Activated CD8-positive, alpha-beta memory T cell treated with anti-CD3 and anti-CD28 coated beads, Interleukin-2, amount 10 ng/mL, durations not matched to agents 7 days and 5 days (primary cell): ENCODE measurements at regions of chr1 and their contacts with region 1.

Region 1: DNA sequence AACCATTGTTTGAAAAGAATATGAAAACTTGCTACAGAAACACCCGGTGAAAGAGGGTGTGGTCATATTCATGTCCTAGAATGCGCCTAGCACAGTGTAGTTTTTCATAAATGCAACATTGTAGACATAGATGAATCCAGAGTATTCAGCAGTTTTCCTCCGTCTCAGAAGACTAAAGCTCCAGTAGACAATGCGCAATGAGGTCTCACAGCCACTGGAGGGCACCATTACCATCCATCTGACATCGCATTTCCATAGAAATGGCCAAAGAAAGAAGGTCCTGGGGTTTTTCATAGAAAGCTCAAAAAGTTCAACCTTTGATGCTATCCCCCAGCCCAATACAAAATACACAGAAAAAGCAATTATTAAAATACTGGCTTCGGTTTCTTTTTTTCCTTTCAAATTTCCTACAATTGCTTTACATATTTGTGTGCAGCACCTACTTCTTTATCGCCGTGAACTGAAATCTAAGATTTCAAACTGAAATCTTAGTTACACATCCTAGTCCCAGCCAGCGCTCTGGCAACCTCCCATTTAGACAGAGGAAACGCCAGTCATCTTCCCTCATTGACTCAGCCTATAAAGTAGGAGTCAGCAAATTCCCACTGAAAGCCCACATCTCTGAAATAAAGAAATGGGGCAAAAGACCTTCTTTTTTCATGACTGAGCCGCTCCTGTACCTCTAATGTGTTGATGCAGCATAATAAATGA is 3.9 kb upstream of the CD58 start:
- DNase-seq: peak; percentile 76
- ATAC-seq: no peak
- H3K4me3 Mint-ChIP-seq: no peak overlapping the region
- H3K27ac Mint-ChIP-seq: no peak overlapping the region
- H3K4me1 Mint-ChIP-seq: peaks cover 30% of the 10 kb centered on the region
- H3K27me3 Mint-ChIP-seq: peaks cover 5% of the 10 kb centered on the region

Region 2: DNA sequence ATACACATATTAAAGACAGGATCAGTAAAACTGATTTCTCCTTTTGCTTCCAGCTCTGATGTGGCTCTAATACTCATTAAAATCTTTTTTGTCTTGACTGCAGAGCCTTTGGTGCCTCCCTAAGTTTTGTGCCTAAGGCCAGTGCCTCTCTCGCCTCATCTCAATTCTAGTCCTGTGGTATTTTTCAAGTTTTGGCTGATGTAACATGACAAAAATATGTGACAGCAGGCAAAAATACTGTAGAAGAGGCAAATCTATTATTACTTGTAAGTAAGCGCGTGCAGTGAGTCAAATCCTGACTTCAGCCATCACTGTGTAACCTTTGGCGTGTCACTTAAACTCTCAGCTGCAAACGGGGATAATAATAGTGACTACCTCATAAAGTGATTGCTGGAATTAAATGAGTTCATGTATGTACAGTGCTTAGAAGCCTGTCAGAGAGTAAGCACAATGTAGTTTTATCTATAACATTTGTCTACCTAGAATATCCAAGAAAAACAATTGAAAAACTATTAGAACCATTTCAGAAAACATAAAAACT is 389.5 kb before region 1 on chr1:
- CTCF ChIA-PET with region 1: no interaction called
- DNase-seq: no peak
- ATAC-seq: no peak
- H3K4me3 Mint-ChIP-seq: no peak overlapping the region
- H3K27ac Mint-ChIP-seq: no peak overlapping the region
- H3K4me1 Mint-ChIP-seq: no peaks in the 10 kb centered on the region
- H3K27me3 Mint-ChIP-seq: peaks cover 21% of the 10 kb centered on the region

Region 3: DNA sequence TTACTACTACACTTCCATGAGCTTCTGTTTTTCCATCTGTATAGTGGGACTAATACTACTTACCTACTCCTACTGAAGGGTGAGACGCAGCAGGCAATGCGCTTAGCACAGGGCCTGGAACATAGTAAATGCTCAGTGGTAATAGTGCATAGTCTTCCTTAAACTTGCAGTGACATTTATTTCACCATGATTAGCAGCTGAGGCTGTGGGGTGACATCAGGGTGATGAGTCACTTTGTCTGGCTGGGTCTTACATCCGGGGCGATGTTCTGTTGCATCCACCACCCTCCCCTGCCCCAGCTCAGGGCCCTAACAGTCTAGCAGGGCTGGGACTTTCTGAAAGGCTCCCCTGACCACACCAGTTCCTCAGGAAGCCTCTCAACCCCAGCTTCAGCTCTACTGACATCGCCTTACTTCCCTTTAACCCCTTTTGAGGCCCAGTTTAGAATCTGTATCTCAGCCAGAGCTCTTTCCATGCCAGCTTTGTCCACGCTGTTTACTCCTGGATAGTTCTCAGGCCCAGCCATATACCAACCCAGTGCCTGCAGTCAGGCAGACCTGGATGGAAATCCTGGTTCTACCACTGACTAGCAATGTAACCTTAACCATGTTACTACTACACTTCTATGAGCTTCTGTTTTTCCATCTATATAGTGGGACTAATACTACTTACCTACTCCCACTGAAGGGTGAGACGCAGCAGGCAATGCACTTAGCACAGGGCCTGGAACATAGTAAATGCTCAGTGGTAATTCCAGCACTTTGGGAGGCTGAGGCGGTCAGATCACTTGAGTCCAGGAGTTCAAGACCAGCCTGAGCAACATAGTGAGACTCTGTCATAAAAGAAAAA is 70.2 kb before region 1 on chr1:
- CTCF ChIA-PET with region 1: interaction called, 12 read pairs
- DNase-seq: peak; percentile 96
- ATAC-seq: peak; percentile 94
- H3K4me3 Mint-ChIP-seq: peak overlapping the region; percentile 18
- H3K27ac Mint-ChIP-seq: peak overlapping the region; percentile 92
- H3K4me1 Mint-ChIP-seq: peaks cover 76% of the 10 kb centered on the region
- H3K27me3 Mint-ChIP-seq: no peaks in the 10 kb centered on the region

Region 4: DNA sequence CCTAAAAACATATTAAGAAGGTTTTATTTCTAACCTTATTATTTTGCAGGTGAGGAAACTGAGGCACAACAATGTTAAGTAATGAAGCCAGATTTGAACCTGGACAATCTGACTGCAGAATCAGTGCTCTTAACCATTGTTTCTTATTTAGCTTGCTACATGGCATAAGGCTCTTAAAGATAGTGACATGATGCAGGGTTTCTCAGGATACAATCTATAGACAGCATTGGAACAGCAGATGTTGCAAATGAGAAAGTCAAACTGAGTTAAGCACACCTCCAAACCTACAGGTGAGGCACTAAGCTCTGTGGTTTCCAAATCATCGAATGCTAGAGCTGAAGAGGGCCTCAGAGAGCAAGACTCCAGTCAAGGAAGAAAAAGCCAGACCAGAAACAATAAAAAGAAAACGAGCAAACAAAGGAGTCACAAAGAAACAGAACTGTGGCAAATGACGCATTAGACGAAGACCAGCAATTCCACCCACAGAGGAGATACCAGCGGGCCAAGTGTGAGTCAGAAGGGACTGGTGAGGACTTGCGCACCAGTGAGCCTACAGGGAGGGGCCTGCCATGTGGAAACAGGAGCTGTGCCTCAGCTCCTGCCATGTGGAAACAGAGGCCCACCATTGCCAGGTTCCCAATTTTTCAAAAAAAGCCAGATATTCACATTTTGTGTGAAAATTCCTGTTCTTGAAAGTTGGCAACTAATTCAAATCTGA is 18.3 kb before region 1 on chr1:
- CTCF ChIA-PET with region 1: interaction called, 28 read pairs
- DNase-seq: peak; percentile 93
- ATAC-seq: peak; percentile 94
- H3K4me3 Mint-ChIP-seq: peak overlapping the region; percentile 48
- H3K27ac Mint-ChIP-seq: peak overlapping the region; percentile 95
- H3K4me1 Mint-ChIP-seq: peaks cover 84% of the 10 kb centered on the region
- H3K27me3 Mint-ChIP-seq: no peaks in the 10 kb centered on the region

Region 5: GRCh38 chr1:116586741-116587143 is 12.0 kb after region 1 on chr1:
- CTCF ChIA-PET with region 1: interaction called, 11 read pairs
- DNase-seq: no peak
- ATAC-seq: no peak
- H3K4me3 Mint-ChIP-seq: no peak overlapping the region
- H3K27ac Mint-ChIP-seq: no peak overlapping the region
- H3K4me1 Mint-ChIP-seq: no peaks in the 10 kb centered on the region
- H3K27me3 Mint-ChIP-seq: no peaks in the 10 kb centered on the region

Region 6: DNA sequence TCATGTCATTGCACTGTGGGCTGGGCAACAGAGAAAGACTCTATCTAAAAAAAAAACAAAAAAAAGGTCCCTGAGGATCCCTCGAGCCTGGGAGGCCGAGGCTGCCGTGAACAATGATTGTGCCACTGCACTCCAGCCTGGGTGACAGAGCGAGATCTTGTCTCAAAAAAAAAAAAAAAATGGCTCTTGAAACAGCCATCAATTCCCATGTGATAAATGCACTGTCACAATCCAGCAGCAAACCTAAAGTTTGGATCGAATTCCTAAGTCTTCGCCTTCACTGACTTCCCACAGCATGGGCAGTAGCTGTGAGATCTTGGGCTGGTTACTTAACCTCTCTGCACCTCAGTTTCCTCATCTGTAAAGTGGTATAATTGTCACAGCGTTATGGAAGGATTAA is 49.3 kb after region 1 on chr1:
- CTCF ChIA-PET with region 1: no interaction called
- DNase-seq: no peak
- ATAC-seq: no peak
- H3K4me3 Mint-ChIP-seq: no peak overlapping the region
- H3K27ac Mint-ChIP-seq: no peak overlapping the region
- H3K4me1 Mint-ChIP-seq: no peaks in the 10 kb centered on the region
- H3K27me3 Mint-ChIP-seq: peaks cover 8% of the 10 kb centered on the region

Region 7: DNA sequence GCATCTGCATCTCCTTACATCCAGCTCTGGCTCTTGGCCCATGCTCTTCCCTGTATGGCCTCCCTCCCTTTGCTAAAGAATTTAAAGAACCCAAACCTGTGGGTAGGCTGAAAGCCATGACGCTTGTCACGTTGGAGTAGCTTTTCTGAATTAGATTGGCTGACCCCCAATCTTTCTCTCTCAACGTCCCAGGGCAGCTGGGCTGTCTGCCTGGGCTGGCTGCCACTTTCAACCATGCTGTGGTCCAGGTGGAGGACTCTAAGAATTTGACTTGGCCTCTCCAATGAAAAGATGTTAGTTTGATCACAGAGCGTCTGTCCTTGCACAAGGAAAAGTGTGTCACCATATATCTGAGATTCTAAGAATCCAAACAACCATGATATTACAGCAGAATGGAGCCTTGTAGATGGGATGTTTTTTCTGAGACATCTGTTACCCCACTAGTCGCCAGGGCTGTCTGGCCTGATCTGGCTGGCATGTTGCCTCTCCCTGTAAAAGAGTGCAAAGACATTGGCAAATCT is 99.3 kb after region 1 on chr1:
- CTCF ChIA-PET with region 1: interaction called, 16 read pairs
- DNase-seq: no peak
- ATAC-seq: no peak
- H3K4me3 Mint-ChIP-seq: no peak overlapping the region
- H3K27ac Mint-ChIP-seq: no peak overlapping the region
- H3K4me1 Mint-ChIP-seq: peaks cover 1% of the 10 kb centered on the region
- H3K27me3 Mint-ChIP-seq: peaks cover 61% of the 10 kb centered on the region

Region 8: GRCh38 chr1:116811321-116811720 is 236.6 kb after region 1 on chr1:
- CTCF ChIA-PET with region 1: no interaction called
- DNase-seq: no peak
- ATAC-seq: no peak
- H3K4me3 Mint-ChIP-seq: no peak overlapping the region
- H3K27ac Mint-ChIP-seq: peak overlapping the region; percentile 76
- H3K4me1 Mint-ChIP-seq: peaks cover 85% of the 10 kb centered on the region
- H3K27me3 Mint-ChIP-seq: no peaks in the 10 kb centered on the region